CD8-positive, alpha-beta T cell (primary cell): ENCODE measurements at regions of chr14 and their contacts with region 1.

Region 1: GRCh38 chr14:105086833-105087307 is 21.6 kb upstream of the GPR132 start:
- DNase-seq: peak; percentile 71 to 96 (median 87)
- ATAC-seq: peak; percentile 87
- H3K4me3 ChIP-seq: peak overlapping the region; percentile 59 to 65
- H3K4me3 Mint-ChIP-seq: peak overlapping the region; percentile 78
- H3K27ac ChIP-seq: peak overlapping the region in 1 of 2 experiments; percentile 43
- H3K27ac Mint-ChIP-seq: peak overlapping the region; percentile 77
- H3K4me1 ChIP-seq: peaks cover 36% of the 10 kb centered on the region
- H3K4me1 Mint-ChIP-seq: peaks cover 9% of the 10 kb centered on the region
- H3K27me3 ChIP-seq: no peaks in the 10 kb centered on the region
- H3K27me3 Mint-ChIP-seq: no peaks in the 10 kb centered on the region
- CTCF ChIP-seq: peak; percentile 83

Region 2: GRCh38 chr14:103641181-103641580 is 1445.7 kb before region 1 on chr14:
- CTCF ChIA-PET with region 1: no interaction called
- POLR2A ChIA-PET with region 1: no interaction called
- intact Hi-C with region 1: no loop called
- DNase-seq: no peak
- ATAC-seq: no peak
- H3K4me3 ChIP-seq: no peak overlapping the region
- H3K4me3 Mint-ChIP-seq: no peak overlapping the region
- H3K27ac ChIP-seq: no peak overlapping the region
- H3K27ac Mint-ChIP-seq: no peak overlapping the region
- H3K4me1 ChIP-seq: peaks cover 9% of the 10 kb centered on the region
- H3K4me1 Mint-ChIP-seq: peaks cover 50% of the 10 kb centered on the region
- H3K27me3 ChIP-seq: no peaks in the 10 kb centered on the region
- H3K27me3 Mint-ChIP-seq: no peaks in the 10 kb centered on the region
- CTCF ChIP-seq: no peak

Region 3: GRCh38 chr14:104494483-104494882 is 592.4 kb before region 1 on chr14:
- CTCF ChIA-PET with region 1: no interaction called
- POLR2A ChIA-PET with region 1: no interaction called
- intact Hi-C with region 1: no loop called
- DNase-seq: peak in 2 of 9 experiments; percentile 3 to 14
- ATAC-seq: no peak
- H3K4me3 ChIP-seq: no peak overlapping the region
- H3K4me3 Mint-ChIP-seq: no peak overlapping the region
- H3K27ac ChIP-seq: no peak overlapping the region
- H3K27ac Mint-ChIP-seq: no peak overlapping the region
- H3K4me1 ChIP-seq: no peaks in the 10 kb centered on the region
- H3K4me1 Mint-ChIP-seq: peaks cover 10% of the 10 kb centered on the region
- H3K27me3 ChIP-seq: no peaks in the 10 kb centered on the region
- H3K27me3 Mint-ChIP-seq: peaks cover 4% of the 10 kb centered on the region
- CTCF ChIP-seq: no peak

Region 4: DNA sequence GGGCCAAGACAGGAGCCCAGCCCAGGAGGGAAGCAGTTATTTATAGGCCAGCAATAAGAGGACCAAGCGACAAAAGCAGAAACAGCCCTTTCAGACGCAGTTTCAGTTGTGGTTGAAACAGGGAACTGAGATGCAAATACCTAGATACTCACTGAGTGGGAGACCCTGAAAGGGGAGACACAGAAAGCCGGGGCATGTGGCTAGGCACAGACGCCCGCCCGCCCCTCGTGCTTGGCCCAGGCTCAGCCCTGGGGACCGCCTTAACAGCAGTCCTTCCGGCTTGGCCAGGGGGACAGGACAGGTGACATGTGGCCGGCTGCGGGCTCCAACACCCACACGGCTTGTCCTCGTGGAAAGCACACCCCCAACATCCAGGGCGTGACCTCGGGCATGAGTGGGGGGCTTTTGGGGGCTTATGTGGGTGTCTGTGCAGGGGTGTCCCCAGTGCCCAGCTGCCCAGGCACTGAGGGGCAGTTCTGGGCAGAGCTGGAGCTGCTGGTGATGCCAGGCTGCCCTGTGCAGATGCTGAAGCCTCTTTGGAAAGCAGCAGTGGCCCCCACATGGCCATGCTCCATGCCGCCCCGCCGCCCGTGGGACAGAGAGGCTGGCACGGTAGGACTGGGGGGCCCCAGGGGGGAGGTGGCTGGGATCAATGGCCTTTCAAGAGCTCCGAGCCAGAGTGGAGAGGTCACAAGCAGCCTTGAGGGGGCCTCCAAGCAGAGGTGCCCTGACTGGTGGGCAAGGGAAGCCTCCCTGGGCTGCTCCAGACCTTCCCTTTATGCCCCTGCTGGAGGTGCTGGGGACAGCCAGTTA is 160.0 kb before region 1 on chr14:
- CTCF ChIA-PET with region 1: no interaction called
- POLR2A ChIA-PET with region 1: no interaction called
- intact Hi-C with region 1: no loop called
- DNase-seq: no peak
- ATAC-seq: no peak
- H3K4me3 ChIP-seq: no peak overlapping the region
- H3K4me3 Mint-ChIP-seq: no peak overlapping the region
- H3K27ac ChIP-seq: no peak overlapping the region
- H3K27ac Mint-ChIP-seq: no peak overlapping the region
- H3K4me1 ChIP-seq: no peaks in the 10 kb centered on the region
- H3K4me1 Mint-ChIP-seq: no peaks in the 10 kb centered on the region
- H3K27me3 ChIP-seq: peaks cover 0 to 3% of the 10 kb centered on the region in 2 experiments
- H3K27me3 Mint-ChIP-seq: no peaks in the 10 kb centered on the region
- CTCF ChIP-seq: no peak

Region 5: GRCh38 chr14:104976198-104977007 is 110.5 kb before region 1 on chr14:
- CTCF ChIA-PET with region 1: interaction called, 47 read pairs
- POLR2A ChIA-PET with region 1: no interaction called
- intact Hi-C with region 1: loop called (anchors 1 kb)
- DNase-seq: peak; percentile 76 to 94 (median 88)
- ATAC-seq: peak; percentile 88
- H3K4me3 ChIP-seq: no peak overlapping the region
- H3K4me3 Mint-ChIP-seq: peak overlapping the region; percentile 67
- H3K27ac ChIP-seq: no peak overlapping the region
- H3K27ac Mint-ChIP-seq: no peak overlapping the region
- H3K4me1 ChIP-seq: peaks cover 8% of the 10 kb centered on the region
- H3K4me1 Mint-ChIP-seq: peaks cover 12% of the 10 kb centered on the region
- H3K27me3 ChIP-seq: peaks cover 9 to 16% of the 10 kb centered on the region in 2 experiments
- H3K27me3 Mint-ChIP-seq: peaks cover 22% of the 10 kb centered on the region
- CTCF ChIP-seq: peak; percentile 84

Region 6: DNA sequence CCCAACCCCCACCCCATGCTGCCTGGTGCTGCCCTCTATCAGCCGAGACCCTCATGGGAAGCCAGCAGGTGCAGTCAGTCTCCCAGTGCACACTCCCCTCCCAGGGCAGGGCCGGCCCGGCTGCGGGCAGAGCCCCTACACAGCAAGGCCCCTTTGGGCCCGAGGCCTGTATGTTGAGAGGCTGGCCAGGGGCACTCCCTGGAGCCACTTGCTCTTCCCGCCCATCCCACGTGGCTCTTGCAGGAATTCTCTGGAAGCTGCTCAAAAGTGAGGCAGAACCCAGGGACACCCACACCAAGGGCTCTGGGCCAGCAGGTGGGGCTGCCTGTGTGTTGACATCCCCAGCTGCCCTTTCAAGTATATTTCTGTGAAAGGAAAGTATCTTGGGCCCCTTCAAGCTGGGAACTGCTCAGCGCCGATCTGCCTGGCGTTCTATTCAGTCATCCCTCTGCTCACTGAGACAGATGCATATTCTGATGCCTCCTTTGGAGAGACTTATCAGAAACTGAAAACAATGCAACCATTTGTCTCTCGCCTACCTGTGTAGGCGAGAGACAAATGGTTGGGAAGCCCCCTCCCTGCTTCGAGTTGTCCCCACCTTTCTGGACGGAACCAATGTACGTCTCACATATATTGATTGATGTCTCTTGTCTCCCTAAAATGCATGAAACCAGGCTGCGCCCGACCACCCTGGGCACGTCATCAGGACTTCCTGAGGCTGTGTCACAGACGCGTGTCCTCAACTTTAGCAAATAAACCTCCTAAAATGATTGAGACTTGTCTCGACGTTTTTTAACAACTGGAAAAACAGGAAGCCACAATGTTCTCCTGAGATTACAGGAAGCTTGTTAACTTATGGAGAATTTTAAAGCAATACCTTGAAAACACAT is 27.6 kb before region 1 on chr14:
- CTCF ChIA-PET with region 1: interaction called, 213 read pairs
- POLR2A ChIA-PET with region 1: interaction called, 43 read pairs
- intact Hi-C with region 1: loop called (anchors 1 kb)
- DNase-seq: peak in 6 of 9 experiments; percentile 48 to 93 (median 83)
- ATAC-seq: peak; percentile 77
- H3K4me3 ChIP-seq: peak overlapping the region in 1 of 2 experiments; percentile 13
- H3K4me3 Mint-ChIP-seq: peak overlapping the region; percentile 70
- H3K27ac ChIP-seq: peak overlapping the region; percentile 97 to 98
- H3K27ac Mint-ChIP-seq: peak overlapping the region; percentile 92
- H3K4me1 ChIP-seq: peaks cover 60% of the 10 kb centered on the region
- H3K4me1 Mint-ChIP-seq: peaks cover 56% of the 10 kb centered on the region
- H3K27me3 ChIP-seq: no peaks in the 10 kb centered on the region
- H3K27me3 Mint-ChIP-seq: no peaks in the 10 kb centered on the region
- CTCF ChIP-seq: peak; percentile 11

Region 7: DNA sequence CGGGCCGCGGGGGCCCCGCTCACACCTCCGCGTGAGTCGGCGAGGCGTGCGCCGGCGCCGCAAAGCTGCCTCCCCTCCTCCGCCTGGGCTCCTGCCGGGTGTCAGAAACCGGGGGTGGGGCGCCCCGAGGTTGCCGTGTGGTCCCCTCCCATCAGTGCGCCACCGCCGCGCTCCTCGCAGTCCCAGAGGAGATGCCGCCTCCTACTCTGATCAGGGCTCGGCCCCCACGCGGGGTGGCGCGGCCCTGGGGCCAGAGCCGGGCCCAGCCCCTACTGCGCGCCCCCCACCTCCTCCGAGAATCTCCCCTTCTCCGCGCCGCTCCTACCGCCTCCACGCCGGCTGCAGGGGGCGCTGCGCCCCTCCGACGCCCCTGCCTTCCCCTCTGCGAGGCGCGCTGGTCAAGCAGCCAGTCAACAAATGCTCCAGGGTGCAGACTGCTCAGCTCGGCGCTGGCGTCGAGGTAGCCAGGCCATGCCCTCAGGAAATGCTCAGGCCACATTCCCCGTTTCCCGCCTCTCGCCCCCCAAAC is 82.2 kb after region 1 on chr14:
- CTCF ChIA-PET with region 1: interaction called, 6 read pairs
- POLR2A ChIA-PET with region 1: no interaction called
- intact Hi-C with region 1: loop called in 1 of 2 experiments (anchors 5 kb)
- DNase-seq: peak in 5 of 9 experiments; percentile 28 to 63 (median 34)
- ATAC-seq: peak; percentile 47
- H3K4me3 ChIP-seq: peak overlapping the region in 1 of 2 experiments; percentile 27
- H3K4me3 Mint-ChIP-seq: peak overlapping the region; percentile 77
- H3K27ac ChIP-seq: no peak overlapping the region
- H3K27ac Mint-ChIP-seq: no peak overlapping the region
- H3K4me1 ChIP-seq: peaks cover 23% of the 10 kb centered on the region
- H3K4me1 Mint-ChIP-seq: peaks cover 8% of the 10 kb centered on the region
- H3K27me3 ChIP-seq: peaks cover 14 to 20% of the 10 kb centered on the region in 2 experiments
- H3K27me3 Mint-ChIP-seq: peaks cover 18% of the 10 kb centered on the region
- CTCF ChIP-seq: peak; percentile 53

Region 8: DNA sequence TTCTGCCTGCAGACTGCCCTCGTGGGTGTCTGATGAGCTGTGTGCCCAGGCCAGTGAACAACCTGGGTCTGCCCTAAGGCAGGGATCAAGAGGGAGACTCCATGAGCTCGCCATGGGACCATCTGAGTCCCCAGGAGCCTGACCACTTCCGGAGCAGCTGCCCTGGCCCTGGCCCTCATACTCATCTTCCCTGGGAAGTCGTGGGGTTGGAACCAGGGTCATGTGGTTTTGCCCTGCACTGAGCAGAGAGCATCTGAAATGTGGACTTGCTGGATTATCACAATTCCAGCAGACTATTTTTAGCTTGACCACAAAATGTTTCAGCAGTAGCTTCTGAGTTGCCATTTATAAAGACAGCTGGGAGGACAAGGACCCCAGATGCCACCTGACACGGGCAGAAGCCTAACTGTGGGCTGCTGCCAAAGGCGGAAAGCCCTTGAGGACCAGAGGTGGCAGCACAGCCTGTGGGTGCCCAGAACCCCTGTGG is 168.2 kb after region 1 on chr14:
- CTCF ChIA-PET with region 1: no interaction called
- POLR2A ChIA-PET with region 1: no interaction called
- intact Hi-C with region 1: no loop called
- DNase-seq: no peak
- ATAC-seq: no peak
- H3K4me3 ChIP-seq: no peak overlapping the region
- H3K4me3 Mint-ChIP-seq: no peak overlapping the region
- H3K27ac ChIP-seq: no peak overlapping the region
- H3K27ac Mint-ChIP-seq: no peak overlapping the region
- H3K4me1 ChIP-seq: no peaks in the 10 kb centered on the region
- H3K4me1 Mint-ChIP-seq: peaks cover 8% of the 10 kb centered on the region
- H3K27me3 ChIP-seq: no peaks in the 10 kb centered on the region
- H3K27me3 Mint-ChIP-seq: no peaks in the 10 kb centered on the region
- CTCF ChIP-seq: no peak

Region 9: DNA sequence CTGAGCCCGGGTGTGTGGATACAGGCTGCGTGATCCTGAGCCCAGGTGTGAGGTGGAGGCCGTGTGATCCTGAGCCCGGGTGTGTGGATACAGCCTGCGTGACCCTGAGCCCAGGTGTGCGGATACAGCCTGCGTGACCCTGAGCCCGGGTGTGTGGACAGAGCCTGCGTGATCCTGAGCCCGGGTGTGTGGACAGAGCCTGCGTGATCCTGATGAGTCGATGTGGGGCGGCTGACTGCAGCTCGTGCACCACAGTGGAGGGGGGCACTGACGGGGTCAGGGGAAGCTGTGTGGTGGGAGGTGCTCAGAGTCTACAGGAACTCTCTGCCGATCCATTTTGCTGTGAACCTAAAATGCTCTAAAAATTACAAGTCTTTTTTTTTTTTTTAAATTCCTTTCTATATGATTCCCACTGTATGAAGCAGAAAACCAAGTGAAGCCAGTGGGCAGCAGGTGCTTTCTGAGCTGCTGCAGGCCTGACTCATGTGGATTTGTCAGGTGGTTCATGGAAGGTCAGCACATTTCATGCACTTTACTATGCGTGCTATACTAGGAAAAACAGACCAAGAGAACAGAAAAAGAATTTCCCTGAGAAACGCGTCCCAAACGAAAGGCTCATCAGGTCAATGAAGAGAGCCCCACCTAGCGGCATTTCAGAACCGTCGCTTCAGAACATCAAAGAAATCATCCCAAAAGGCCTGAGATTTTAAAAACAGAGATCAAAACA is 194.7 kb after region 1 on chr14:
- CTCF ChIA-PET with region 1: interaction called, 5 read pairs
- POLR2A ChIA-PET with region 1: no interaction called
- intact Hi-C with region 1: loop called (anchors 1 to 2 kb)
- DNase-seq: peak in 4 of 9 experiments; percentile 19 to 66 (median 40)
- ATAC-seq: no peak
- H3K4me3 ChIP-seq: no peak overlapping the region
- H3K4me3 Mint-ChIP-seq: no peak overlapping the region
- H3K27ac ChIP-seq: no peak overlapping the region
- H3K27ac Mint-ChIP-seq: no peak overlapping the region
- H3K4me1 ChIP-seq: peaks cover 16% of the 10 kb centered on the region
- H3K4me1 Mint-ChIP-seq: peaks cover 25% of the 10 kb centered on the region
- H3K27me3 ChIP-seq: no peaks in the 10 kb centered on the region
- H3K27me3 Mint-ChIP-seq: no peaks in the 10 kb centered on the region
- CTCF ChIP-seq: peak; percentile 32

Region 10: DNA sequence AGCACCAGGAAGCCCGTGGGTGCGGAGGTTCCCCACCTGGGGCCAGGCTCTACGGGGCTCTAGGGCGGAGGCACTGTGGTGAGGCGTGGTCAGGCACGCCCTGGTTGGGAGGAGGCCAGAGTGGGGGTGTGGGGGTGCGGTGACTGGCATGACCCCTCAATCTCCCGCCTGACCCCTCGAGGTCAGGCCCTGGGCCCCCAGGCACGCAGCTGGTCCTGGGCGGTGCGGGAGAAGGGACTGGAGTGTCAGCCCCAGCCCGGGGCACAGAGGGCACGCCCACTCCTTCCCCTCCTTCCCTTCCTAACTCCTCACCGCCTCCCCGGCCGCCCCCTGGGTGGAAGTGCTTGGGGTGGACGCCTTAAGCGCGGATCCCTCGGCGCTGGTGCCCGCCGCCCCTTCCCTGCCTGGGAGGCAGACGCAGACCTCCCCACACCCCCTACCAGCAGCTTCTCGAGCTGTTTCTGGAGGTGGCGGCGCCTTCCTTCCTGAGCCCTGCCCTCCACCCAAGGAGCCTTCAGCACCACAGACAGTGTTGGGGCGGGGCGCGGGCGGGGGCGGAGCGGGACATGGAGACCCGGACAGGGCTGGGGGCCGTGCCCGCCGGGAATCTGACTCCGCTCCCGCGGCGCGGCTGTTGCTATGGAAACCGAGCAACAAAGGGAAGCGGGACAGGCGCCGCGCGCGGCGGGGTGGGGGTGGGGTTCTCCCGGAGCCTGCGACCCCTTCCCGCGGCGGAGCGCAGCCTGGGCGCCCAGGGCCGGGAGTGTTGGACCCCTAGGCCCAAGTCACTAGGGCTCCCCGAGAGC is 387.0 kb after region 1 on chr14:
- CTCF ChIA-PET with region 1: no interaction called
- POLR2A ChIA-PET with region 1: no interaction called
- intact Hi-C with region 1: loop called in 1 of 2 experiments (anchors 5 kb)
- DNase-seq: peak in 8 of 9 experiments; percentile 52 to 77 (median 76)
- ATAC-seq: peak; percentile 62
- H3K4me3 ChIP-seq: peak overlapping the region; percentile 41 to 53
- H3K4me3 Mint-ChIP-seq: peak overlapping the region; percentile 70
- H3K27ac ChIP-seq: no peak overlapping the region
- H3K27ac Mint-ChIP-seq: no peak overlapping the region
- H3K4me1 ChIP-seq: peaks cover 43% of the 10 kb centered on the region
- H3K4me1 Mint-ChIP-seq: peaks cover 14% of the 10 kb centered on the region
- H3K27me3 ChIP-seq: peaks cover 0 to 25% of the 10 kb centered on the region in 2 experiments
- H3K27me3 Mint-ChIP-seq: peaks cover 3% of the 10 kb centered on the region
- CTCF ChIP-seq: no peak